Calu3 (cell line): ENCODE measurements at regions of chr4 and their contacts with region 1.

Region 1: GRCh38 chr4:184745831-184746795 is 12.2 kb upstream of the CENPU start:
- DNase-seq: peak; percentile 76
- H3K4me3 Mint-ChIP-seq: peak overlapping the region; percentile 49
- H3K27ac Mint-ChIP-seq: peak overlapping the region; percentile 85
- H3K4me1 Mint-ChIP-seq: peaks cover 28% of the 10 kb centered on the region
- H3K27me3 Mint-ChIP-seq: no peaks in the 10 kb centered on the region
- CTCF ChIP-seq: peak; percentile 56

Region 2: GRCh38 chr4:184688447-184688846 is 57.7 kb before region 1 on chr4:
- CTCF ChIA-PET with region 1: no interaction called
- intact Hi-C with region 1: no loop called
- DNase-seq: peak; percentile 69
- H3K4me3 Mint-ChIP-seq: no peak overlapping the region
- H3K27ac Mint-ChIP-seq: peak overlapping the region; percentile 56
- H3K4me1 Mint-ChIP-seq: no peaks in the 10 kb centered on the region
- H3K27me3 Mint-ChIP-seq: no peaks in the 10 kb centered on the region
- CTCF ChIP-seq: no peak

Region 3: GRCh38 chr4:184733654-184734524 is 12.2 kb before region 1 on chr4 and contains the start of gene CENPU:
- CTCF ChIA-PET with region 1: interaction called, 13 read pairs
- intact Hi-C with region 1: no loop called
- DNase-seq: peak; percentile 93
- H3K4me3 Mint-ChIP-seq: peak within 1 kb of the TSS; percentile 96
- H3K27ac Mint-ChIP-seq: peak within 1 kb of the TSS; percentile 90
- H3K4me1 Mint-ChIP-seq: no peaks in the 10 kb centered on the region
- H3K27me3 Mint-ChIP-seq: no peaks in the 10 kb centered on the region
- CTCF ChIP-seq: no peak
- total RNA-seq, gene CENPU: 61.3 and 79.2 TPM in 2 replicates

Region 4: DNA sequence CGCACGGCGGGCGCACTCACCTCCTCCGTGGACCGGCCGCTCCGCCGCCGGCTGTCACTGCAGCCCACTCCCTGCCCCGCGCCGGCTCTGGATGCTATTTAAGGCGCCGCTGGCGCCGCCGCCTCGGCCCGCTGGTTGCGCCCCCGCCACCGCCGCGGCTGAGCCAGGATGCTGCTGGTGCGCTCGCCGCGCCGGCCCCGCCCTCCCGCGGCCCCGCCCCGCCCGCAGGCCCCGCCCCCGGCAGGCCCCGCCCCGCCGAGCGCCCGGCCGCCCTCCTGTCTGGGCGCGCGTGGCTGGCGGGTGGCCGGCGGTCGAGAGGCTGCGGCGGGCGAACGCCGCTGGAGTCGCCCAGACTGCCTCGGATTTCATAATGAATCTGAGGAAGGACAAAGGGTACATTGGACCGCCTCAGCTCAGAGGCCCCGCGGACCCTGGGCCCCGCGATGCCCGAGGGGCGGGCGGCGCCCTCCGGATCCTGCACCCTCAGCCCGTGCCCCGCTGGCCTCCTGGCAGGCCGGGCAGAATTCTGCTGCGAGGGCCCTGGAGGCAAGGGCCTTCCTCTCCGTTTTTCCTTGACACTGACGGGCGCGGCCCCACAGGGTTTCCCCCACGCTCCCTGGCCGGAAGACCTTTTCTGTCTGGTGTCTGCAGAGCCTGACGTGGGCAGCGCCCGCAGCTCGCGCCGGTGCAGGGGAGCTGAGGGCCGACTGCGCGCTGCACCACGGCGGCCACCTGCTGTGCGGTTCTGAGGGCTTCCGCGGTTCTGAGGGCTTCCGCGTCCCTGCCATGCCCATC is 80.0 kb after region 1 on chr4 and contains the start of gene ACSL1:
- CTCF ChIA-PET with region 1: interaction called, 3 read pairs
- intact Hi-C with region 1: loop called (anchors 2 kb)
- DNase-seq: peak; percentile 68
- H3K4me3 Mint-ChIP-seq: peak within 1 kb of the TSS; percentile 94
- H3K27ac Mint-ChIP-seq: no peak within 1 kb of the TSS
- H3K4me1 Mint-ChIP-seq: no peaks in the 10 kb centered on the region
- H3K27me3 Mint-ChIP-seq: no peaks in the 10 kb centered on the region
- CTCF ChIP-seq: no peak
- total RNA-seq, gene ACSL1: 19.1 and 31.9 TPM in 2 replicates

Region 5: DNA sequence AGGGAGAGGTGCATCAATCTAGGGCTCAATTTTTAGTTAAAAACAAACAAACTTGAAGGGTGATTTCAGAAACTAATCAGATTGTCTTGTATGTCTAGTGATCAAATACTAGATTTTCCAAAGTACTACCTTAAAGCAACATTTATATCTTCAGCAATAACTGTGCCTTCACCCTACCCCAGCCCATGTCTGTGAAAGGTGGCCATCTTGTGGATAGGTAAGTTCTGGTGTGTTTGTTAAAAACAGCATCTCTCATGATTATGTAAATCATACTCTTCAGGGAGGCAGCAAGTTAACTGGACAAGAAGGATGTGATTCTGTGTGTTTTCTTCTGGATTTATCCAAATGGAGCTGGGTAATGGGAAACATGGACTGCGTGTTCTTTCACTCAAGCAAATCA is 161.1 kb after region 1 on chr4:
- CTCF ChIA-PET with region 1: no interaction called
- intact Hi-C with region 1: loop called (anchors 1 kb)
- DNase-seq: no peak
- H3K4me3 Mint-ChIP-seq: no peak overlapping the region
- H3K27ac Mint-ChIP-seq: no peak overlapping the region
- H3K4me1 Mint-ChIP-seq: no peaks in the 10 kb centered on the region
- H3K27me3 Mint-ChIP-seq: no peaks in the 10 kb centered on the region
- CTCF ChIP-seq: no peak

Region 6: GRCh38 chr4:185096032-185096653 is 350.0 kb after region 1 on chr4:
- CTCF ChIA-PET with region 1: interaction called, 4 read pairs
- intact Hi-C with region 1: loop called (anchors 5 kb)
- DNase-seq: peak; percentile 36
- H3K4me3 Mint-ChIP-seq: no peak overlapping the region
- H3K27ac Mint-ChIP-seq: no peak overlapping the region
- H3K4me1 Mint-ChIP-seq: no peaks in the 10 kb centered on the region
- H3K27me3 Mint-ChIP-seq: no peaks in the 10 kb centered on the region
- CTCF ChIP-seq: no peak

Region 7: DNA sequence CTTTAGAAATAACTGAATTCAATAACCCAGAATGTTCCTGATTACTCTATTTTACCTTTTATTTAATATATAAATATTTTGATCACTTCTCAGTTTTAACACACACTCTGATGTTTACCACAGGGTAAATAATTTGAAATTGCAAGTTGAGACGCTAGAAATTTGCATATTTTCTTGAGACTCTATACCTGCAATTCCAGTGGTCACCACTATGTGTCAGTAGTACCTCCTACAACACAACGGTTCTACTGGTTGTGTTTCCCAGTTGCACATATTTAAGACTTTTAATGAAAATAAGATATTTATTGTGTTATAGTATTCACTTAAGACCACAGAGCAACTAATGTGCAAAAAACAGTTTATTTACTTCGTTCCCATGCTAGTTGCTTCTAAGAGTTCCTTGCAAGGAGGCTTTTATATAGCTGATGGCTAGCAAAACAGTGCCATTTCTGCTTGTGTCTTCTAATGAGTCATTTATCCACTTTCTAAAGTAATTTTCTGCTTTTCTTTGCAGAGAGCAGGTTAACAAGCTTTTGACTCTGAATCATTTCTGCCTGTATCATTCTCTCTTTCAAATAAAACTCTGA is 888.0 kb after region 1 on chr4:
- CTCF ChIA-PET with region 1: no interaction called
- intact Hi-C with region 1: no loop called
- DNase-seq: no peak
- H3K4me3 Mint-ChIP-seq: no peak overlapping the region
- H3K27ac Mint-ChIP-seq: no peak overlapping the region
- H3K4me1 Mint-ChIP-seq: no peaks in the 10 kb centered on the region
- H3K27me3 Mint-ChIP-seq: no peaks in the 10 kb centered on the region
- CTCF ChIP-seq: peak; percentile 30